Dorsolateral prefrontal cortex (tissue), 120 donors: ENCODE measurements at regions of chr9 and their contacts with region 1.

Region 1: DNA sequence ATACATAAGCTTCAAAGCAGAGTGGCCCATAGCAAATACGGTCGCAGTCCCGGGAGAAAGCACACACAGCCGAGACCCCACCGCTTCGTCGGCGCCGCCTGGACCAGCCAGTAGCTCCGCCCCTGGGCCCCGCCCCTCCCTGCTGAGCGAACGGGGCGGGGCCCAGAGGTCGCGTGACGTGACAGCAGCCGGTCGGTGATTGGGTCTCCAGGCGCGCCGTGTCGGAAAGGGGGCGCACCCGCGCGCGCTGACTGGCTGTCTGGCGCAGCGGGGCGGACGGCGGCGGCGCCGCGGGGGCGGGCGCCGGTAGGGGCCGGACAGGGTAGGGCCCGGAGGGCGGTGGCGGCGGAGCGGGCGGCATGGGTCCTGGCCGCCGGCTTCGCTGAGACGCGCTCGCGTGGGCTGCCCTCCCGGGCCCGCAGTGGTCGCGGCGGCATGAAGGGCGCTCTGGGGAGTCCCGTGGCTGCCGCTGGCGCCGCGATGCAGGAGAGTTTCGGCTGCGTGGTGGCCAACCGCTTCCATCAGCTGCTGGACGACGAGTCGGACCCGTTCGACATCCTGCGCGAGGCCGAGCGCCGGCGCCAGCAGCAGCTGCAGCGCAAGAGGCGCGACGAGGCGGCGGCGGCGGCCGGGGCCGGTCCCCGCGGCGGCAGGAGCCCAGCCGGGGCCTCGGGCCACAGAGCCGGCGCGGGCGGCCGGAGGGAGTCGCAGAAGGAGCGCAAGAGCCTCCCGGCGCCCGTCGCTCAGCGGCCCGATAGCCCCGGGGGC is at the start of gene HABP4:
- DNase-seq: peak; percentile 92 to 99 (median 96)
- H3K4me3 ChIP-seq: peak within 1 kb of the TSS; percentile 52 to 94 (median 84)
- H3K27ac ChIP-seq: peak within 1 kb of the TSS in 58 of 59 donors; percentile 40 to 95 (median 86)
- H3K27me3 ChIP-seq: no peaks in the 10 kb centered on the region
- CTCF ChIP-seq: peak in 39 of 56 donors; percentile 6 to 77 (median 34)
- total RNA-seq, gene HABP4: 55.7 to 140 (median 94.3) TPM

Region 2: DNA sequence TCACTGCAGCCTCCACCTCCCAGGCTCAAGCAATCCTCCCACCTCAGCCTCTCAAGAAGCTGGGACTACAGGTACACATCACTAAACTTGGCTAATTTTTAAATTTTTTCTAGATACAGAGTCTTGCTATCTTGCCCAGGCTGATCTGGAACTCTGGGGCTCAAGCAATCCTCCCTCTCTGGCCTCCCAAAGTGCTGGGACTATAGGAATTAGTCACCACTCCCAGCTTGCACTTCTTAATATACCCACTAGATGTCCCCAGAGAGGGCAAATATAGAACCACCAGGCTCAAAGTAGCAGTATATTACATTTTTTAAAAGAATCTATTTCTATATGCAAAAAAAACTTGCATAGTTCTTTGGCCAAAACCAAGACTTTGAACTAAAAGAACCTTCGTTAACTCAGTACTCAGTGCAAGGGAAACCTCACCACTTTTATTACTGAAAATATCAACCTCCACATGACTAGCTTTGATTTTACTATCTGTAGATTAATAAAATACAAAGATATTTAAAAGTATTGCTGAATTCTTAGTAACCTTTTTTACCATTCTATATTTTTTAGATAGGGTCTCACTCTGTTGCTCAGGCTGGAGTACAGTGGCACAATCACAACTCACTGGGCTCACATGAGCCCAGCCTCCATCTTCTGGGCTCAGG is 122.2 kb before region 1 on chr9:
- intact Hi-C with region 1: loop called in 1 of 2 experiments (anchors 1 kb)
- DNase-seq: peak in 3 of 10 donors; percentile 17 to 49 (median 42)
- H3K4me3 ChIP-seq: peak overlapping the region in 1 of 59 donors; percentile 13
- H3K27ac ChIP-seq: peak overlapping the region in 33 of 59 donors; percentile 1 to 70 (median 40)
- H3K27me3 ChIP-seq: no peaks in the 10 kb centered on the region
- CTCF ChIP-seq: peak; percentile 73 to 97 (median 90)

Region 3: GRCh38 chr9:96486368-96487028 is 36.5 kb after region 1 on chr9:
- intact Hi-C with region 1: loop called in 1 of 2 experiments (anchors 5 kb)
- DNase-seq: peak in 2 of 10 donors; percentile 21 to 49
- H3K4me3 ChIP-seq: peak overlapping the region in 1 of 59 donors; percentile 15
- H3K27ac ChIP-seq: peak overlapping the region in 53 of 59 donors; percentile 1 to 87 (median 67)
- H3K27me3 ChIP-seq: no peaks in the 10 kb centered on the region
- CTCF ChIP-seq: no peak

Region 4: GRCh38 chr9:96514108-96514799 is 64.2 kb after region 1 on chr9:
- intact Hi-C with region 1: no loop called
- DNase-seq: no peak
- H3K4me3 ChIP-seq: no peak overlapping the region
- H3K27ac ChIP-seq: peak overlapping the region in 52 of 59 donors; percentile 2 to 85 (median 66)
- H3K27me3 ChIP-seq: no peaks in the 10 kb centered on the region
- CTCF ChIP-seq: no peak

Region 5: DNA sequence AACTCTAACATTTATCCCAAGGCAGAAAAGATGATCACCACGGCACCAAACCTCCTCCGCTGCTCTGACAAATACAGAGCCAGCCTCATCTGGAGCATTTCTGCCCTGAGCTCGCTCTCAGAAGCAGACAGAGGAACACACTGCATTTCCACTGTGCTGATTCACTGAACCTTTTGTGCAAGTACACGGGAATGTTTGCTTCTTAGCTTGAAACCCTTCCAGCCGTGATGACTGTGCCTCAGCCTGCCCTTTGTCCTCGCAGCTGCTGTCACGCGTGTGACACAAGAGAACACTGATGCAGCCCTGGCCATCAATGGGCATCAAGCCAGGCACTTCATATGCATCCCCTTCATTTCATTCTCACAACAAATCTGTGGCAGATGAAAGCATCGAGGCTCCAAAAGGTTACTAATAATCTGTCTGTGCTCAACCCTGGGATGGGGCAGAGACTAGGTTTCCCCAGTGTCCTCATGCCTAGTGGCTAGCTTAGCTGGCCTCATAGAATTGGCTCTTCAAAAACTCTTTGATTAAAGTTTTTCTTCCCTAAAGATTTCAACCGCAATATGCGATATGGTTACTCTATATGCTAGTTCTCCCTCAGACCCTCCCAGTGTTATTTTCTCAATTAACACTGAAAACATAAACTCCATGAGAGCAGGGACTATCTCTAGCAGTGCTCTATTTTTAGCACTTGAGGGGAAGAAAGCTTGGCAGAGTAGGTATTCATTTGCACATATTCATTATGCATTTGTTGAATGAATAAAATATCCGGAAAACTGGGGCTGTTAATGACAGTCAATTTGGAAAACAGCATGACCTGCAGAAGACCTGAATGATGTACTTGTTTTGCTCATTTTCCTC is 162.3 kb after region 1 on chr9:
- intact Hi-C with region 1: loop called in 1 of 2 experiments (anchors 1 kb)
- DNase-seq: peak; percentile 35 to 94 (median 88)
- H3K4me3 ChIP-seq: peak overlapping the region in 57 of 59 donors; percentile 6 to 61 (median 41)
- H3K27ac ChIP-seq: peak overlapping the region; percentile 70 to 99 (median 94)
- H3K27me3 ChIP-seq: no peaks in the 10 kb centered on the region
- CTCF ChIP-seq: peak in 9 of 56 donors; percentile 9 to 37 (median 26)

Region 6: DNA sequence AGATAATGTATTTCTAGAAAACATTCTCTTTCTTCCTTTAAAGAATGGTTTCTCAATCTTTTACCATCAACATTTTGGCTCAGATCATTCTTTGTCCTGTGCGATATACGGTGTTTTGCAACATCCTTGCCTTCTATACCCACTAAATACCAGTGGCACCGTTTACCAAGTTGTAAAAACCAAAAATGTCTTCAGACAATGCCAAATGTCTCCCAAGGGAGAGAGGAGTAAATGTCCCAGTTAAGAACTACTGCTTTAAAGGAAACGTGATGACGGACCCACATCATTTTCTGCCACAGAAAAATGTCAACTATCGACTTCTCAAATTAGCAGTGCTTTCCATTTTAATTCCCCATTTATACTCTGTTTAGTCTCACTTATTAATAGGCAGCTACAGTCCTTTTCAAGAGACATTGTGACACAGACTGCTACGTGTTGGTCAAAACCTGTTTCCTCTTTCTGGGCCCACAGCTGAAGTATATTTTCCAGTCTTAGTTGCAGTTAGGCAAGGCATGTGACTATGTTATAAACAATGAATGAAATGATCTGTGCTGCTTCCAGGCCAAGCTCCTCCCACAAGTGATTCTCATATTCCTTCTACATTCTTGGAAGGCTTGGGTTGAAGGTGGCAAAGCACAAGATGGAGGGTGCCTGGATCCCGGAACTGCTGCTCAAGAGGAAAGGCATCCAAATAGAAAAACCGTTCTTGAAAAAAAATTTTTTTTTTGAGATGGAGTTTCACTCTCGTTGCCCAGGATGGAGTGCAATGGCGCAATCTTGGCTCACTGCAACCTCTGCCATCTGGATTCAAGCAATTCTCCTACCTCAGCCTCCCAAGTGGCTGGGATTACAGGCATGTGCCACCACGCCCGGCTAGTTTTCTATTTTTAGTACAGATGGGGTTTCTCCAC is 196.3 kb after region 1 on chr9:
- intact Hi-C with region 1: loop called in 1 of 2 experiments (anchors 5 kb)
- DNase-seq: no peak
- H3K4me3 ChIP-seq: no peak overlapping the region
- H3K27ac ChIP-seq: peak overlapping the region in 15 of 59 donors; percentile 4 to 64 (median 22)
- H3K27me3 ChIP-seq: no peaks in the 10 kb centered on the region
- CTCF ChIP-seq: no peak

Region 7: DNA sequence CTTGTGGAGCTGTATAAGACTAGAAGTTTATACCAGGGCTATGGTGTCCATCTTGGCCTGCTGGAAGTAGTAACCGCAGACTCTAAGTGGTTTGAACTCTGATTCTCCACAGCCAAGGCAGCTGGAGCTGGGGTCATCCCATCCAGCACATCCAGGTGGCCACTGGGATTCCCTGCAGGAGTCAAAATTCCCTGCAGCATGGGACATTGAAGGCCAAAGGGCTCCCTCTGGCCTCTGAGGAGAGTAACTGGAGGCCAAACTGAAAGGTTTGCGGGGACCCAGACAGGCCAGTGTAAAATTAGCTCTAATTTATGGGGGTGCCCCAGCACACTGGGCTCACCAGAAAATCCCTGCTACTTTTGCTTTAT is 217.3 kb after region 1 on chr9:
- intact Hi-C with region 1: loop called in 1 of 2 experiments (anchors 5 kb)
- DNase-seq: no peak
- H3K4me3 ChIP-seq: no peak overlapping the region
- H3K27ac ChIP-seq: no peak overlapping the region
- H3K27me3 ChIP-seq: no peaks in the 10 kb centered on the region
- CTCF ChIP-seq: no peak